Psoas muscle (tissue), 8 donors: ENCODE measurements at regions of chr19 and their contacts with region 1.

Region 1: DNA sequence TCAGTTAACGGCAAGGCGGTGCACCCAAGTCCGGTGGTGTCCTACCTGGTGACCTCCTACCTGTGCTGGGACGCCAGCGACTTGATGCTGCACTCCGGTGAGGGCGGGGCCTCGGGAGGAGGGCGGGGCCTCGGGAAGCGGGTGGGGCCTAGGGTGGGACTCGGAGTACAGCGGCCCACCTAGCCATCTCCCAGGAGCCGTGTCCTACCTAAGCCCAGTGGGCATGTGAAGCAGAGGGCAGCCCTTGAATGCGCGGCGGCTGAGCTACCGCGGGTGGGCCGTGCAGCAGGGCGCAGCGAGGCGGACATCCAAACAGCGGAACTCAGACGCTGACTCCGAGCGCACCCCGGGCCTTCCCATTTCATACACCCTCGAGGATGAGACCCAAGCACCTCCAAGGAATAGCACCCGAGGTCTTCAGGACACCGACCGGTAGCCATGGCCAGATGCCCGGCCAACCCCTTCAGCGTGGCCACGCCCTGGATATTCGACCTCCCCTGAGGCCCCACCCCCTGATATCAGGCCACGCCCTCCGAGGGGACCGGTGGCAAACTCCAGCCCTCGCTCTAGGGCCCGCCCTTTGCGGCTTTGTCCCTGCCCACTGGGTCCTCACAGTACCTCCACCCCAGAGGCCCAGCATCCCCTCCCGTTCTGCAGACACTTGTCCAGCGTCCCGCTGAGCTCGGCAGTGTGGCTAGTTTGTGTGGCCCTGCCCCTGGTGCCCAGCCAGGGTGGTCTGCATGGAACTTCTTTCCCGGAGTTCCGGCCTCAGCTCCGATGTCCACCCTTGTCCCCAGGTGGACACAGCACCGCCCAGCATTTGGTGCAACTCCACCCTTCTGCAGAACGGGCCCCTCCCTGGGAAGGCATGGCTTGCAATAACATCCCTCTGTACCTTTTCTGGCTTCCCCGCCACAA is 5.4 kb downstream of the KLK1 start:
- DNase-seq: peak; percentile 29 to 63
- ATAC-seq: peak in 1 of 4 donors; percentile 30
- H3K4me3 ChIP-seq: peak overlapping the region; percentile 36
- H3K27ac ChIP-seq: no peak overlapping the region
- H3K4me1 ChIP-seq: no peaks in the 10 kb centered on the region
- H3K27me3 ChIP-seq: peaks cover 0 to 75% (median 32%) of the 10 kb centered on the region in 3 donors
- CTCF ChIP-seq: no peak

Region 2: DNA sequence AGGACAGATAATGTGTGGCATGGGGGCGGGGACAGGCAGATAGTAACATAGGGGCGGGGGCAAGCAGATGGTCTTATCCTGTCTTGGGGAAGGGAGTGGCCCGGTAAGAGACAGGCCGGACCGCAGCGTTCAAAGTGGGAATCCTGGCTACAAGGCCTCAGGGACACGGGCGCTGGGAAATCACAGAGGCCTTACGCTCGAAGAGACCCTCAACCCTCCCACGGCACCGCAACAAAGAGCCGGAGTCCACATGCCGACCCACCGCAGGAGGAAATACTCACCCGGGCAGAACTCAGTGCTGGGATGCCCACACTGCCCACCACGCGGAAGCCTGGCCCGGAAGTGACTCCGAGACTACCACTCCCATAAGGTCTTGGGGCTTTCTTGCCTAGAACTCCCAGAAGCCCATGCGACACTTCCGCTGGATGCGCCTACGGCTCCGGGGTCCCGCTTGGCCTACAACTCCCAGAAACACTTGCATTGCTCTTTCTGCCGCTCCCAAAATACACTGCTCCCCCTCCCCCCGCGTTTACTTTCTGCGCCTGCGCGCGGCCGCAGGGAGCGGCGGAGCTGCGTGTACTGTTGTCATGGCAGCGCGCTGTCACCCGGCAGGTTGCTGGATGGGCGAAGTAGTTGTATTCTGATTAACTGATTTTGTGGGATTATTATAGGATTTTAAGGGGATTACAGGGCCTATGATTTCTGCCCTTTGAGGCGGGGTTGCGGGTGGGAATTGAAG is 290.0 kb after region 1 on chr19 and contains the start of gene CTU1:
- intact Hi-C with region 1: loop called in 1 of 2 experiments (anchors 10 kb)
- DNase-seq: peak; percentile 98 to 99
- ATAC-seq: peak; percentile 99 to 100 (median 99)
- H3K4me3 ChIP-seq: peak within 1 kb of the TSS; percentile 85
- H3K27ac ChIP-seq: peak within 1 kb of the TSS; percentile 75
- H3K4me1 ChIP-seq: peaks cover 7% of the 10 kb centered on the region
- H3K27me3 ChIP-seq: peaks cover 0 to 5% (median 0%) of the 10 kb centered on the region in 3 donors
- CTCF ChIP-seq: no peak
- total RNA-seq, gene CTU1: 4.9 to 9.1 (median 6.0) TPM